BJ (cell line): ENCODE measurements at regions of chr5 and their contacts with region 1.

Region 1: DNA sequence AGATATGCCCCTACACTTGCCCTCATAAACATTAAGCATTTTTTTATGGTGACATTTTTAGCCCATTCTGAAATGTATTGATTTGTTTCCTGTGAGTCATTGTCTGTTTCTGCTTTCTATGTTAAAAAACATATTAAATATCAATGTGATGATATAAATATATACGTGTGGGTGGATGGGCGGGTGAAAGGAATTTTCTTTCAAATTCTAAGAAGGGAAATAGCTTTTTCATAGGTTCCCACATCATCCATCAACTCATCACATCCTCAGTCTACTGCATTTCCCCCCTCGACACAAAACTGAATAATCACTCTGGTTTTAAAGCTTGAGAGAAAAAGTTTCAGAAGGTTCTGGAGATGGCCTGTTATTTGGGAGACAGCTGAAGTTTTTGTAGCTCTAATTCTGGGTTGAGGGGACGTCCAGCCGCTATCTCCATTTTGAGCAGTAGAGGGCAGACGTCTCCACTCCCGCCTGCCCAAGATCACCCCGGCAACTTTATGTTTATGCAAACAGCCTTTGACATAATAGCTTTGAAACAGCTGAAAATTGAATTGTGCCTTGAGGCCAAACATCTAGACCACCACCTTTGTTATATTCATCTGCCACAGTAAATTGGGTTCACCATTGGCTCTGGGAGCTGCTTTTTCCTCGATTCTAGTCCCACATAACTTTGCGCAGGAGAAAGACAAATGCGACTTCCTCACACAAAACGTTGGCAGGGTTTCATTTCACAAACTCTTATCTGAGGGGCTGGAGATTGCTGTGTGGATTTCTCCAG is 216.2 kb upstream of the CLINT1 start:
- DNase-seq: no peak
- H3K4me3 ChIP-seq: no peak overlapping the region
- H3K27me3 ChIP-seq: no peaks in the 10 kb centered on the region
- CTCF ChIP-seq: peak; percentile 92

Region 2: DNA sequence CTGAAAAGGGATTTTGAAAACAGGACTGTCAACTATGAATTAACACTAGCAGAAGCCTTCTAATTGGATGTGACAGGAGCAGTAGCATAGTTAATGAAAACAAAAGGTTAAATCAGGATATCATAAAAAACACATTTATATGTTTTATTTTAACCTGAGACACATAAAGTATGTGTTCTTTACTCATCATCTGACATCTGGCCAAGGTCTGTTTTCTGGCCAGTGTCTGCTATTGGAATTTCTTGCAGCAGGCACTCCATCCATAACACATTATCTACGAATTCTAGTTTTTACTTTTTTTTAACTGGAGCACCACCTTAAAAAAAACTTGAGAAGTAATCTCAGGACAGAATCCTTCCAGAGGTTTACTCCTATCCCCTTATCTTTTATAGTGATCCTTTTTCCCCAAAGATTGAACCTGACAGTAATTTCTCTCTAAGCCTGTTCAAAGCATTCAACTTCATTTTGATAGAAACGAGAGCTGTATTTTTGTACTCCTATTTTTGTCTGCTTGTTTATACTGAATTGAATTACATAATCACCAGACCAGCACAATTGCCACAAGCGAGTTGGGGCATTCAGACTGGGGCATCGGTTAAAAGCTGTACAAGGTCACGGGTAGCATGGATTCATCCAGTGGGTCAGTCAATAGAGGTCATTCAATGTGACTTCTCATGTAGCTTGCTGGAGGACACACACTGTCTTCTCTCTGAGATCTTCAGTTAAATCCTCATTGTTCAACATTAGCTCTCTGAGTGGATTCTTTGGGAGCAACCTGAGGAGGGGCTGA is 10.7 kb before region 1 on chr5:
- CTCF ChIA-PET with region 1: interaction called, 26 read pairs
- POLR2A ChIA-PET with region 1: no interaction called
- DNase-seq: no peak
- H3K4me3 ChIP-seq: no peak overlapping the region
- H3K27me3 ChIP-seq: no peaks in the 10 kb centered on the region
- CTCF ChIP-seq: no peak

Region 3: GRCh38 chr5:158390577-158390976 is 315.4 kb after region 1 on chr5:
- CTCF ChIA-PET with region 1: no interaction called
- POLR2A ChIA-PET with region 1: no interaction called
- DNase-seq: no peak
- H3K4me3 ChIP-seq: no peak overlapping the region
- H3K27me3 ChIP-seq: no peaks in the 10 kb centered on the region
- CTCF ChIP-seq: no peak